GM12878 (cell line): ENCODE measurements at regions of chr4 and their contacts with region 1.

Region 1: GRCh38 chr4:26088433-26088928 is 174.5 kb downstream of the SMIM20 start:
- DNase-seq: peak; percentile 80
- ATAC-seq: peak; percentile 92
- H3K4me3 ChIP-seq: no peak overlapping the region
- H3K27ac ChIP-seq: peak overlapping the region; percentile 29; the same call in 1 of the 2 replicates
- H3K4me1 ChIP-seq: peaks cover 30% of the 10 kb centered on the region
- H3K27me3 ChIP-seq: no peaks in the 10 kb centered on the region
- CTCF ChIP-seq: no peak
- EP300 ChIP-seq: peak; percentile 23 to 72; a peak in 2 of 4 replicates
- POLR2A ChIP-seq: no peak
- RAD21 ChIP-seq: no peak

Region 2: DNA sequence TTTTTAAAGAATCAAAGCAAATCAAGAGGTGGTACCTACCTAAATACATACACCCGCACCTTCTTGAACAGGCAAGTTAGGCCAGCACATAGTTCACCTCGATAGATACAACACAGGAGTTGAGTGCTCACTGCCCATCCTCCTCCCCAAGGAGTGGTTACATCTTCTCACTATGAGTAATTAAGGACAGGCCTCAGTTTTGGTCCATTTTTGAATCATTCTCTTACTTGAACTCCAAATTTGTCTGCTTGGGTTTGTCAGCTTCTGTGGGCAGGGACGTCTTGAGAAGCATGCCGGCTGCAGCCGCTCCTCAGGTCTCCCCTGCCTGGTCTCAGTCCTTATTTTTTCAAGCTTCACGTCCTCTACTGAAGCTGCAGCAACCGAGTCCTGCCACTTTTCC is 41.7 kb after region 1 on chr4:
- CTCF ChIA-PET with region 1: interaction called, 11 read pairs
- POLR2A ChIA-PET with region 1: interaction called, 5 read pairs
- RAD21 ChIA-PET with region 1: interaction called, 11 read pairs
- SMC1A ChIA-PET with region 1: interaction called, 13 read pairs
- in situ Hi-C with region 1: no loop called
- intact Hi-C with region 1: loop called (anchors 5 kb)
- DNase-seq: peak; percentile 90
- ATAC-seq: peak; percentile 79
- H3K4me3 ChIP-seq: no peak overlapping the region
- H3K27ac ChIP-seq: peak overlapping the region; percentile 60
- H3K4me1 ChIP-seq: peaks cover 52% of the 10 kb centered on the region
- H3K27me3 ChIP-seq: no peaks in the 10 kb centered on the region
- CTCF ChIP-seq: no peak
- EP300 ChIP-seq: peak; percentile 78 to 79; a peak in 3 of 4 replicates
- POLR2A ChIP-seq: no peak
- RAD21 ChIP-seq: peak; percentile 30; the same call in 1 of the 2 replicates